Gastrocnemius medialis (tissue), 4 donors: ENCODE measurements at regions of chr2 and their contacts with region 1.

Region 1: DNA sequence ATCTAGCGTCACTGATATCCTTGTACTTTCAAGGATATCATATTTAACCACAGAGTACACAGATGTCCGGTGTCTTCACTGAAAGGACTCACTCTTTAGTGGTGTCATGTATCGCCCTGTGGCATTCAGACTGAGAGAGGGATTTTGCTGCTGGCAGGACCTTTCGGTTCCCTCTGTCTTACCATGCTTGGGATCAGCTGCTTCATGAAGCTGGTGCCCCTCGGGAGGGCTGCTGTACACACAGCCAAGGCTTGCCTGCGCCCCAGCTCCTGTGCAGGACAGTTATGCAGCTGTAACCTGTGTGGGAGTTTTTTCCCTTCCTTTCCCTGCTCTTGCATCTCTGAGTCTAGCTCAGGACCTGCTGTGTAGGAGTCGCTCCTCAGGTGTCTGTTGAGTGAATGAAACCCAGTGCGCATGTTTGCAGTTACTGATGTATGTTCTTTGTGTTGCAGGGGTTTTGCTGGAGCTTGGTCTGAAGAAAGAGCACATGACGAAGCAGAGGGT is 64.4 kb downstream of the GREB1 start:
- DNase-seq: peak; percentile 82 to 89
- ATAC-seq: peak; percentile 95 to 96
- H3K4me3 ChIP-seq: no peak overlapping the region
- H3K27ac ChIP-seq: peak overlapping the region; percentile 86 to 94 (median 90)
- H3K4me1 ChIP-seq: peaks cover 15 to 18% of the 10 kb centered on the region in 2 donors
- H3K27me3 ChIP-seq: no peaks in the 10 kb centered on the region
- CTCF ChIP-seq: no peak
- POLR2A ChIP-seq: peak in 1 of 2 donors; percentile 31

Region 2: GRCh38 chr2:11498543-11499080 is 99.7 kb before region 1 on chr2:
- in situ Hi-C with region 1: no loop called
- intact Hi-C with region 1: loop called (anchors 1 kb)
- DNase-seq: peak; percentile 95 to 98
- ATAC-seq: peak; percentile 95 to 97
- H3K4me3 ChIP-seq: no peak overlapping the region
- H3K27ac ChIP-seq: peak overlapping the region; percentile 66 to 84 (median 78)
- H3K4me1 ChIP-seq: peaks cover 13 to 21% of the 10 kb centered on the region in 2 donors
- H3K27me3 ChIP-seq: no peaks in the 10 kb centered on the region
- CTCF ChIP-seq: no peak
- POLR2A ChIP-seq: peak; percentile 26 to 41

Region 3: GRCh38 chr2:11617946-11618707 is 19.8 kb after region 1 on chr2:
- in situ Hi-C with region 1: no loop called
- intact Hi-C with region 1: no loop called
- DNase-seq: no peak
- ATAC-seq: no peak
- H3K4me3 ChIP-seq: no peak overlapping the region
- H3K27ac ChIP-seq: no peak overlapping the region
- H3K4me1 ChIP-seq: no peaks in the 10 kb centered on the region
- H3K27me3 ChIP-seq: no peaks in the 10 kb centered on the region
- CTCF ChIP-seq: no peak
- POLR2A ChIP-seq: no peak

Region 4: DNA sequence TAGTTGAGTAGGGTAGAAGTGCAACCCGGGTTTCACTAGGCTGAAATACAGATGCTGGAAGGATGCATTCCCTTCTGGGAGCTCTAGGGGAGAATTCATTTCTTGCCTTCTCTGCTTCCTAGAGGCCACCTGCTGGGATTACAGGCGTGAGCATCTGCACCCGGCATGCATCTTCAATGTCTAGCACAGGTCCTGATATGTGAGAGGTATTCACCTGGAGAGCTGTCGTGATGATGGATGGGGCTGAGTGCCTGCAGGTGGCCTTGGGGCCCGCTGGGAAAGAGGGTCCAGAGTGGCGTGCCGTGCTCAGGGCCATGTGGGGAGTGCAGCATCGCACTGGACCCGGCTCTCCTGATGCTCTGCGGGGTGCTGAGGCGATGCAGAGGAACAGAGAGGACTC is 78.4 kb after region 1 on chr2:
- in situ Hi-C with region 1: loop called in 1 of 4 experiments (anchors 10 kb)
- intact Hi-C with region 1: loop called (anchors 1 kb)
- DNase-seq: no peak
- ATAC-seq: no peak
- H3K4me3 ChIP-seq: no peak overlapping the region
- H3K27ac ChIP-seq: peak overlapping the region; percentile 92 to 100 (median 93)
- H3K4me1 ChIP-seq: peaks cover 43 to 57% of the 10 kb centered on the region in 2 donors
- H3K27me3 ChIP-seq: no peaks in the 10 kb centered on the region
- CTCF ChIP-seq: peak in 2 of 5 experiments; percentile 12 to 31
- POLR2A ChIP-seq: no peak

Region 5: DNA sequence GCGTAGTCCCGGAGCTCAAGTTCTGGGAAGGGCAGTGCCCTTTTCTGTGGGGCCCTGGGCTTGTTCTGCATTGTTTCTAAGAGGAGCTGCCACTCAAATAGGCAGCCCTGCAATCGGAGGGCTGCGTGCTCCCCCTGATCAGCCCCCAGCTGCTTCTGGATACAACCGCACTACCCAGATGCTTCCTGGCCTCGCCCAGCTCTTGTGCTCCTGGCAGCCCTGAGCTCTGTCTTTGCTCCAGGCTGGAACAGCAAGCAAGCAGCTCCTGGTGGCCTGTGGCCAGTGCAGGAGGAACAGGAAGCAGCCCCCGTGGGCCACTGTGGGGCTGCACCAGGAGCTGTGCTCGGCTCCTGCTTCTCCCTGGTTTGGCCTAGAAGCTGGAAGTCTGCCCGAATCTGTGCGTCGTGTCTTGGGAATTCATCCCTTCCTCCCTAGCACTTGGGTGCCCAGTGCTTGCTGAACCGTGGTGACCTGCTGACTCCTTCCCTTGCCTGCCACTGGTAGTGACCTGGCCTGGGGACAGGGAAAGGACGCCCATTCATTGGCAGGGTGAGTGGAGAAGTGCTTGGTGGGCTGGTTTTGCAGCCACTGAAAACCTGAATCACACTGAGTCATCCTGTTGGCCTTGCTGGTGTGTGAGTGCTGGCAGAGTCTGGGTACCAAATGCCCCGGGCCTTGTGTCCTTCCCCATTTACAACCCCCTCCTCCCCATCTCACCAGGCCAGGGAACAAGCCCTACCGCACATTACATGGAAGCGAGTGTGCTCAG is 99.0 kb after region 1 on chr2:
- in situ Hi-C with region 1: no loop called
- intact Hi-C with region 1: loop called (anchors 1 kb)
- DNase-seq: peak; percentile 90 to 98
- ATAC-seq: peak; percentile 56 to 58
- H3K4me3 ChIP-seq: peak overlapping the region; percentile 27 to 44 (median 41)
- H3K27ac ChIP-seq: peak overlapping the region; percentile 93 to 100 (median 98)
- H3K4me1 ChIP-seq: peaks cover 60 to 65% of the 10 kb centered on the region in 2 donors
- H3K27me3 ChIP-seq: no peaks in the 10 kb centered on the region
- CTCF ChIP-seq: no peak
- POLR2A ChIP-seq: no peak

Region 6: DNA sequence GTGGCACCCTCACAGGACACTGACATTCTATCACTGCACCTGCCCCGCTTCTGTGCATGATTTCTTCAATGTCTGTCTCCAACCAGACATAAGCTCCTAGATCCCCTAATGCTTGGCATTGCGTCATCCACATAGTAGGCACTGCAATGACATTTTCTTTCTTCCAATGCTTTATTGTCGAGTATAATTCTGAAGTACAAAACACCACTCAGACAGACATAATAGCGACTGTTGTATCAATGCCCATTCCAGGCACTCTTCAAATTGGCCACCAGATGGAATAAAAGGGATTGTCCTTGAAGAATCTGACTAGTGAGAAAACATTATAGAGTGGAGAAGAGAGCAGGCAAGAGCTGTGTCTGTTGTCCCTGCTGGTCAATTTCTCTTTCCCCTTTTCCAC is 237.1 kb after region 1 on chr2:
- in situ Hi-C with region 1: no loop called
- intact Hi-C with region 1: no loop called
- DNase-seq: no peak
- ATAC-seq: no peak
- H3K4me3 ChIP-seq: no peak overlapping the region
- H3K27ac ChIP-seq: no peak overlapping the region
- H3K4me1 ChIP-seq: peaks cover 3 to 4% of the 10 kb centered on the region in 2 donors
- H3K27me3 ChIP-seq: no peaks in the 10 kb centered on the region
- CTCF ChIP-seq: no peak
- POLR2A ChIP-seq: no peak